ENCODE measurements at regions of chr7 and their contacts with region 1.

Region 1: GRCh38 chr7:152675759-152676636 is at the start of gene XRCC2:
- DNase-seq: peak; percentile 97
- ATAC-seq: peak; percentile 91
- H3K4me3 ChIP-seq: peak within 1 kb of the TSS; percentile 55 to 96 (median 77)
- H3K4me3 Mint-ChIP-seq: peak within 1 kb of the TSS; percentile 96
- H3K27ac ChIP-seq: peak within 1 kb of the TSS; percentile 58 to 90
- H3K27ac Mint-ChIP-seq: peak within 1 kb of the TSS; percentile 87
- H3K4me1 ChIP-seq: peaks cover 7 to 11% of the 10 kb centered on the region in 2 donors
- H3K4me1 Mint-ChIP-seq: peaks cover 11% of the 10 kb centered on the region
- H3K27me3 ChIP-seq: no peaks in the 10 kb centered on the region
- H3K27me3 Mint-ChIP-seq: no peaks in the 10 kb centered on the region
- CTCF ChIP-seq: no peak
- total RNA-seq, gene XRCC2: 1.2 and 1.5 TPM in 2 replicates

Region 2: GRCh38 chr7:151954866-151955820 is 720.9 kb before region 1 on chr7:
- CTCF ChIA-PET with region 1: no interaction called
- POLR2A ChIA-PET with region 1: no interaction called
- intact Hi-C with region 1: no loop called
- DNase-seq: no peak
- ATAC-seq: no peak
- H3K4me3 ChIP-seq: no peak overlapping the region
- H3K4me3 Mint-ChIP-seq: no peak overlapping the region
- H3K27ac ChIP-seq: no peak overlapping the region
- H3K27ac Mint-ChIP-seq: no peak overlapping the region
- H3K4me1 ChIP-seq: no peaks in the 10 kb centered on the region
- H3K4me1 Mint-ChIP-seq: no peaks in the 10 kb centered on the region
- H3K27me3 ChIP-seq: no peaks in the 10 kb centered on the region
- H3K27me3 Mint-ChIP-seq: peaks cover 24% of the 10 kb centered on the region
- CTCF ChIP-seq: no peak

Region 3: GRCh38 chr7:152424348-152425108 is 251.5 kb before region 1 on chr7:
- CTCF ChIA-PET with region 1: no interaction called
- POLR2A ChIA-PET with region 1: interaction called, 6 read pairs
- intact Hi-C with region 1: loop called (anchors 5 kb)
- DNase-seq: no peak
- ATAC-seq: no peak
- H3K4me3 ChIP-seq: no peak overlapping the region
- H3K4me3 Mint-ChIP-seq: peak overlapping the region; percentile 26
- H3K27ac ChIP-seq: no peak overlapping the region
- H3K27ac Mint-ChIP-seq: peak overlapping the region; percentile 21
- H3K4me1 ChIP-seq: peaks cover 23 to 30% of the 10 kb centered on the region in 2 donors
- H3K4me1 Mint-ChIP-seq: peaks cover 63% of the 10 kb centered on the region
- H3K27me3 ChIP-seq: no peaks in the 10 kb centered on the region
- H3K27me3 Mint-ChIP-seq: no peaks in the 10 kb centered on the region
- CTCF ChIP-seq: no peak

Region 4: GRCh38 chr7:152504367-152504766 is 171.6 kb before region 1 on chr7:
- CTCF ChIA-PET with region 1: no interaction called
- POLR2A ChIA-PET with region 1: no interaction called
- intact Hi-C with region 1: no loop called
- DNase-seq: no peak
- ATAC-seq: no peak
- H3K4me3 ChIP-seq: no peak overlapping the region
- H3K4me3 Mint-ChIP-seq: no peak overlapping the region
- H3K27ac ChIP-seq: no peak overlapping the region
- H3K27ac Mint-ChIP-seq: no peak overlapping the region
- H3K4me1 ChIP-seq: no peaks in the 10 kb centered on the region
- H3K4me1 Mint-ChIP-seq: no peaks in the 10 kb centered on the region
- H3K27me3 ChIP-seq: no peaks in the 10 kb centered on the region
- H3K27me3 Mint-ChIP-seq: no peaks in the 10 kb centered on the region
- CTCF ChIP-seq: no peak

Region 5: DNA sequence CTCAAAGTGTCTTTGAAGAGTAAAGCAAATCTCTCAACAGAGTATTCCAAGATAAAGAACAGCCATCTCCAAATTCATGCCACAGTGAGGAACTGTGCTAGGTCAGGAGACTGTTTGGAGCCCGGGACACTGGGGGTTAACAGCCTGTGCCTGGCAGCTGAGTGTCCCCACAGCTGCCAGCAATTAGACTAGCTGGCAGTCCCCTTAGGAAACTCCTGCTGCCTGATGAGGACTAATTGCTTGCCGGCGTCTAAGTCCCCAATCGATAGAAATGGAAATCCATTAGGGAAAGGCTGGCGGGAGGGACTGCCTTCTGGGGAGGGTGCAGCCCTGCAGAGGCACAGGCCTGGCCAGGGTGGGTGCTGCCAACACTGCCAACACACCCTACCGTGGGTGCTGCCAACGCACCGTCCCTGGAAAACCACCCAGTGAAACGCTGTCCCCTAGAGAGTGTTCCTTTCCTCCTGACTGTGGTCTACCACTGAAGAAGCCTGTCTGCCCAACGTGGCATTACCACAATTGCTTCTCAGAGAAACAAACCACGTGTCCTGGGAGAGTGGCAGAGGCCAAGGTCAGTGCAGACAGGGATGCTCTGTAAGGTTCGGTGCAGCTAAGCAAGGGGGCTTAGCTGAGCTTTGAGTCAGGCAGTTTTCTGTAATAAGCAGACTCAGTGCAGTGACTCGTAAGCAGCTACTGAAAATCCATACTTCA is 60.8 kb before region 1 on chr7:
- CTCF ChIA-PET with region 1: no interaction called
- POLR2A ChIA-PET with region 1: no interaction called
- intact Hi-C with region 1: no loop called
- DNase-seq: no peak
- ATAC-seq: no peak
- H3K4me3 ChIP-seq: no peak overlapping the region
- H3K4me3 Mint-ChIP-seq: no peak overlapping the region
- H3K27ac ChIP-seq: no peak overlapping the region
- H3K27ac Mint-ChIP-seq: no peak overlapping the region
- H3K4me1 ChIP-seq: no peaks in the 10 kb centered on the region
- H3K4me1 Mint-ChIP-seq: no peaks in the 10 kb centered on the region
- H3K27me3 ChIP-seq: no peaks in the 10 kb centered on the region
- H3K27me3 Mint-ChIP-seq: no peaks in the 10 kb centered on the region
- CTCF ChIP-seq: no peak

Region 6: DNA sequence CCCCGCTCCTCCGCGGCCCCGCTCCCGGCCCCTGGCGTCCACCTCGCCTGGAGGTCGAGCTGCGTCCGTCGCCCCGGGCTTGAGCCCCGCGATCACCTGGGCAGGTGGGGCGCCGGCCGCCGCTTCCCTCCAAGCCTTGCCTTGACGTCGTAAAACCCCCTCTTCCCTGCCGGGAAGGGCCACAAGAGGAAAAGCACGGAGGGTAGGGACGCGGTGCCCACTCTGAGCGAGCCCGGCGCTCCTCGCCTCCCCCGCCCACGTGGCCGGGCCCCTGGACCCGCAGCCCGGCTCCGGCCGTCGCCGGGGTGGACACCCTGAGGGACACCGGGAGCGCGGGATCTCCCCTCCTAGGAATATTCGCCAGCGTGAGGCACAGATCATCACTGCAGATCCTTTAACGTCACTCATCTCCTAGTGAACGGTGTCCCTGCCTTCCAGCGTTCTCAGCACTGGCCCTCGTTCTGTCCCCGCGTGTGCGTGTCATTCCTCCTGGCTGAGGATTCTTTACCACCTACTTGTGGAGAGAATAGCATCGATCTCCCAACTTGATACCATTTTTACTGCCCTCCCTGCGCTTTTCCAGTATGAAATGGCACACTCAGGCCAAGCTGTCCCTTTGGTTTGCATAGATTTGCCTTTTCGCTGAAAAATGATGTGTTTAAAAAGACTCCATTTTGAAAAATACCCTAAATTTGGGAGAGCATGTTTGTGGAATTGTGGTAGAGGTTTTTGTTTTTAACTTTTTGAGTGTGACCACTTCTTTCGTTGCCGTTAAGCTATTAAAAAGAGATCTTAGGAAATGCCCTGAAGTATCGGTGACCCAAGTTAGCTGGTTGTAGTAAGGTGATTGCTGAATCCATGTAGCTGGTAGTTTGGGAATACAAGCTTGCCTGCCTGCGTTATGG is 84.2 kb after region 1 on chr7:
- CTCF ChIA-PET with region 1: no interaction called
- POLR2A ChIA-PET with region 1: interaction called, 3 read pairs
- intact Hi-C with region 1: loop called (anchors 1 kb)
- DNase-seq: peak; percentile 53
- ATAC-seq: peak; percentile 9
- H3K4me3 ChIP-seq: peak overlapping the region; percentile 43 to 85 (median 72)
- H3K4me3 Mint-ChIP-seq: peak overlapping the region; percentile 96
- H3K27ac ChIP-seq: peak overlapping the region; percentile 24 to 89
- H3K27ac Mint-ChIP-seq: peak overlapping the region; percentile 91
- H3K4me1 ChIP-seq: peaks cover 11 to 17% of the 10 kb centered on the region in 2 donors
- H3K4me1 Mint-ChIP-seq: peaks cover 16% of the 10 kb centered on the region
- H3K27me3 ChIP-seq: no peaks in the 10 kb centered on the region
- H3K27me3 Mint-ChIP-seq: no peaks in the 10 kb centered on the region
- CTCF ChIP-seq: no peak

Region 7: GRCh38 chr7:152925412-152926147 is 249.6 kb after region 1 on chr7:
- CTCF ChIA-PET with region 1: no interaction called
- POLR2A ChIA-PET with region 1: no interaction called
- intact Hi-C with region 1: no loop called
- DNase-seq: no peak
- ATAC-seq: no peak
- H3K4me3 ChIP-seq: no peak overlapping the region
- H3K4me3 Mint-ChIP-seq: no peak overlapping the region
- H3K27ac ChIP-seq: no peak overlapping the region
- H3K27ac Mint-ChIP-seq: no peak overlapping the region
- H3K4me1 ChIP-seq: no peaks in the 10 kb centered on the region
- H3K4me1 Mint-ChIP-seq: no peaks in the 10 kb centered on the region
- H3K27me3 ChIP-seq: peaks cover 0 to 24% (median 4%) of the 10 kb centered on the region in 4 experiments
- H3K27me3 Mint-ChIP-seq: peaks cover 37% of the 10 kb centered on the region
- CTCF ChIP-seq: no peak